PC-9 (cell line): ENCODE measurements at regions of chr3 and their contacts with region 1.

Region 1: DNA sequence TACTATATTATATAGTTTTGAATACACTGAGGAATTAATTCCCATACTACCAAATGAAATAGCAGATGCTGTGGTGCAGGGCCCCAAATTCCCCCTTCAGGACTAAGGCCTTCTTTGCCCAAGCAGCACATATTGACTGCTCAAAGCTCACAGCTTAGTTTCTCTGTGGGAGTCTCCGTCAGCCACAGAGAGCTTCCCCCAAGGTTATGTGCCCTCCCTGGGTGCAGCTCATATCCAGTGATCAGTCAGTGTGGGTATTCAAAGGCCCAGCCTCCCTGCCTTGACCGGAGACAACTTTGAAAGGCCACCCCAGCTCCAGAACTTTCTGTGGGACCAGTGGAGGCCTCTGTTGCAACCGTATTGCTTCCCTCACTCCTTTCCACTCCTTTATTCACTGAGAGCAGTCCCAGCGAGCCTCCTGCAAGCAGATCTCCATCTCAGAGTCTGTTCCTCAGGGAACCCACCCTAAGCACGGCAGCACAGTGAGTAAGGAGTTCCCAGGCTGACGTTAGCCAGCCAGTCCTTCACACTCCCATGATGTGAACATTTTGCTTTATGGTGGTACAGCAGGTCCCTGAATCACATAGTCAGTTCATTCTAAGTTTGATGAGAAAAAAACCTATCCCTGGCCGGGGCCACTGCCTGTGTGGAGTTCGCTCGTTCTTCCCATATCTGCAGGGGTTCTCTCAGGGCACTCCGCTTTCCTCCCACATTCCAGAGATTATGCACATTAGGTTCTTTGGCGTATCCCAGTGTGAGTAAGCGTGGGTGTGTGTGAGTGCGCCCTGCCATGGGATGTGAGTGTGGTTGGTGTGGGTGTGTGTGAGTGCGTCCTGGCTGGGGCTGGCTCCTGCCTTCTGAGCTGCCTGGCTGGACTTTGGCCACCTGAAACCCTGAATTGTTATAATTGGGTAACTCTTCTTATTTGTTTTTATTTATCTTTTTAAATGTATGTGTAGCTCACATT is 64.4 kb upstream of the PPARG start:
- DNase-seq: no peak
- H3K4me3 ChIP-seq: no peak overlapping the region
- H3K27ac ChIP-seq: 0 out of 2 replicates have a peak overlapping the region, but pooled peaks have one; percentile 77
- H3K4me1 ChIP-seq: peaks cover 46% of the 10 kb centered on the region
- H3K27me3 ChIP-seq: no peaks in the 10 kb centered on the region
- CTCF ChIP-seq: no peak

Region 2: DNA sequence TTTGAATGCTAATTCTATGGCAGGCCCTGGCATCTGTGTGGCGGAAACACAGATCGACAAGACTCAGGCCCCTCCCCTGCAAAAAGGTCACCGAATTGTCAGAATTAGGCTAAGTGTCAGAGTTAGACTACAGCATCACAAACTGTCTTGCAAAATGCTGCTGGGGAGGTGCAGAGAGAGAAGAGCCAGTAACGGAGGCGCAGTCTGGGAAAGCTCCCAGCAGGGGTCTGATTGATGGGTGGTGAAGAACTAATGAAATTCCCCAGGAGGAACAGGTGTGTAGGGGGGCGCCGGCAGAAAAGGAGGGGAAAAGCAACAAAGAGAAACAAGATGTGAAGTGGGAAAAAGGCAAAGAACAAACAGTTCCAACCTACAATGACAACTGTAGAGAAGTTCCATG is 305.1 kb before region 1 on chr3:
- CTCF ChIA-PET with region 1: no interaction called
- POLR2A ChIA-PET with region 1: no interaction called
- intact Hi-C with region 1: no loop called
- DNase-seq: no peak
- H3K4me3 ChIP-seq: no peak overlapping the region
- H3K27ac ChIP-seq: no peak overlapping the region
- H3K4me1 ChIP-seq: no peaks in the 10 kb centered on the region
- H3K27me3 ChIP-seq: peaks cover 100% of the 10 kb centered on the region
- CTCF ChIP-seq: no peak

Region 3: GRCh38 chr3:12158387-12159226 is 65.9 kb before region 1 on chr3 and contains the start of gene TIMP4:
- CTCF ChIA-PET with region 1: no interaction called
- POLR2A ChIA-PET with region 1: no interaction called
- intact Hi-C with region 1: loop called (anchors 2 kb)
- DNase-seq: peak; percentile 76 to 91
- H3K4me3 ChIP-seq: peak within 1 kb of the TSS; percentile 57
- H3K27ac ChIP-seq: peak within 1 kb of the TSS; percentile 84
- H3K4me1 ChIP-seq: peaks cover 42% of the 10 kb centered on the region
- H3K27me3 ChIP-seq: no peaks in the 10 kb centered on the region
- CTCF ChIP-seq: no peak
- total RNA-seq, gene TIMP4: 15.5 and 19.0 TPM in 2 replicates

Region 4: GRCh38 chr3:12235691-12236090 is 11.2 kb after region 1 on chr3:
- CTCF ChIA-PET with region 1: no interaction called
- POLR2A ChIA-PET with region 1: no interaction called
- intact Hi-C with region 1: no loop called
- DNase-seq: no peak
- H3K4me3 ChIP-seq: no peak overlapping the region
- H3K27ac ChIP-seq: no peak overlapping the region
- H3K4me1 ChIP-seq: peaks cover 12% of the 10 kb centered on the region
- H3K27me3 ChIP-seq: no peaks in the 10 kb centered on the region
- CTCF ChIP-seq: no peak

Region 5: GRCh38 chr3:12273045-12273695 is 48.7 kb after region 1 on chr3:
- CTCF ChIA-PET with region 1: no interaction called
- POLR2A ChIA-PET with region 1: interaction called, 10 read pairs
- intact Hi-C with region 1: no loop called
- DNase-seq: no peak
- H3K4me3 ChIP-seq: no peak overlapping the region
- H3K27ac ChIP-seq: no peak overlapping the region
- H3K4me1 ChIP-seq: no peaks in the 10 kb centered on the region
- H3K27me3 ChIP-seq: no peaks in the 10 kb centered on the region
- CTCF ChIP-seq: no peak